ENCODE measurements at regions of chr17 and their contacts with region 1.

Region 1: DNA sequence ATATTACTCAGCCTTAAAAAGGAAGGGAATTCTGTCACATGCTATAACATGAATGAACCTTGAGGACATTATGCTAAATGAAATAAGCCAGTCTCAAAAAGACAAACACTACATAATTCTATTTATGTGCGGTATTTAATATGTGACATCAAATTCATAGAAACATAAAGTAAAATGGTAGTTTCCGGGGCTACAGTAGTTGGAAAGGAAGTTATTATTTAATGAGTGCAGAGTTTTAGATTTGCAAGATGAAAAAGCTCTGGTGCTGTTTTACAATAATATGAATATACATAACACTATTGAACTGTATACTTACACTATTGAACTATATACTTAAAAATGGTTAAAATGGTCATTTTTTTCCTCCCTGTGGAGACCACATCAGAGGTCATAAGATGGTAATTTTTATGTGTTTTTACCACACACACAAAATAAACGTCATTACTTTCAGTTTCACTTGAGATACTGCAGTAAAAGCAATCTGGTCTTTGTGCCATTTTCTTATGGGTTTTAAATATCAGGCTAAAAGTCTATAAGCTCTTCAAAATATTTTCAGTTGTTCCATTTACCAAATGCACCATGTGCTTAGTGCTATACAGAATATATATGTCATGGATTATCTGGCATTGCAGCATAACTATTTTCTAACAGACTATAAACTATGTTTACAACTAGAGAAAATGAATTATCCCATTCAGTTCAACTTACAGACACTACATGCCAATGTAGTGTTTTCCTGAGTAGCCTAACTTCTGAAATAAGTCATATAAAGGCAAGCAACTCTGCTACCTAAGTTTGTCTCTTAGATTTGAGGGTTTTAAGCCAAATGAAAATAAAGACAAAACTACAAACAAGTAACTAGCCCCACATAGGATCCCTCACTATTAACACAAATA is 90.9 kb downstream of the SPAG9 start:
- DNase-seq: no peak
- H3K4me3 Mint-ChIP-seq: peak overlapping the region; percentile 59
- H3K27ac Mint-ChIP-seq: peak overlapping the region; percentile 79
- H3K4me1 Mint-ChIP-seq: peaks cover 45% of the 10 kb centered on the region
- H3K27me3 Mint-ChIP-seq: no peaks in the 10 kb centered on the region

Region 2: GRCh38 chr17:51050291-51051033 is 20.6 kb after region 1 on chr17:
- intact Hi-C with region 1: loop called (anchors 2 kb)
- DNase-seq: no peak
- H3K4me3 Mint-ChIP-seq: no peak overlapping the region
- H3K27ac Mint-ChIP-seq: peak overlapping the region; percentile 59
- H3K4me1 Mint-ChIP-seq: no peaks in the 10 kb centered on the region
- H3K27me3 Mint-ChIP-seq: peaks cover 2% of the 10 kb centered on the region

Measured in activated T-helper 1 cell treated with anti-CD3 and anti-CD28 coated beads, Interleukin-12 subunit alpha, Interleukin-12 subunit beta, Interleukin-2, Interleukin-4 antibody, amounts not matched to agents 30 ng/mL and 10 ng/mL and 1 ng/mL, durations not matched to agents 14 hours and 24 hours and 36 hours (primary cell).